Left cardiac atrium (tissue), 4 donors: ENCODE measurements at regions of chr4 and their contacts with region 1.

Region 1: GRCh38 chr4:78186597-78187543 is 129.7 kb downstream of the FRAS1 start:
- DNase-seq: no peak
- ATAC-seq: no peak

Region 2: GRCh38 chr4:78237360-78237759 is 50.5 kb after region 1 on chr4:
- intact Hi-C with region 1: loop called in 1 of 2 experiments (anchors 5 kb)
- DNase-seq: no peak
- ATAC-seq: no peak